HepG2 (cell line): ENCODE measurements at regions of chr1 and their contacts with region 1.

Region 1: GRCh38 chr1:156295391-156295947 is at the start of gene GLMP:
- DNase-seq: peak; percentile 52
- ATAC-seq: peak; percentile 5; the same call in 1 of the 3 replicates
- H3K4me3 ChIP-seq: peak within 1 kb of the TSS; percentile 73 to 91 (median 76)
- H3K27ac ChIP-seq: peak within 1 kb of the TSS; percentile 60
- H3K4me1 ChIP-seq: peaks cover 44% of the 10 kb centered on the region
- H3K27me3 ChIP-seq: no peaks in the 10 kb centered on the region
- CTCF ChIP-seq: no peak
- EP300 ChIP-seq: 0 out of 4 replicates have a peak, but pooled peaks of 1 of the 2 experiments have one; percentile 14
- POLR2A ChIP-seq: peak; percentile 49 to 65; a peak in 3 of 4 replicates
- RAD21 ChIP-seq: no peak
- total RNA-seq, gene GLMP: 39.1 and 75.8 TPM in 2 replicates

Region 2: GRCh38 chr1:155940531-155940992 is 354.9 kb before region 1 on chr1:
- CTCF ChIA-PET with region 1: no interaction called
- POLR2A ChIA-PET with region 1: no interaction called
- in situ Hi-C with region 1: no loop called
- intact Hi-C with region 1: loop called (anchors 5 kb)
- DNase-seq: peak; percentile 86
- ATAC-seq: peak; percentile 65
- H3K4me3 ChIP-seq: peak overlapping the region; percentile 50 to 65 (median 54); a peak in 5 of 6 replicates
- H3K27ac ChIP-seq: peak overlapping the region; percentile 84
- H3K4me1 ChIP-seq: peaks cover 71% of the 10 kb centered on the region
- H3K27me3 ChIP-seq: no peaks in the 10 kb centered on the region
- CTCF ChIP-seq: peak; percentile 4; the same call in 1 of the 2 replicates
- EP300 ChIP-seq: 0 out of 4 replicates have a peak, but pooled peaks of 1 of the 2 experiments have one; percentile 29
- POLR2A ChIP-seq: peak; percentile 45 to 64
- RAD21 ChIP-seq: no peak

Region 3: GRCh38 chr1:156282479-156283222 is 12.8 kb before region 1 on chr1 and contains the start of gene SMG5:
- CTCF ChIA-PET with region 1: no interaction called
- POLR2A ChIA-PET with region 1: interaction called, 115 read pairs
- in situ Hi-C with region 1: no loop called
- intact Hi-C with region 1: no loop called
- DNase-seq: peak; percentile 97
- ATAC-seq: peak; percentile 93
- H3K4me3 ChIP-seq: peak within 1 kb of the TSS; percentile 71 to 95 (median 87)
- H3K27ac ChIP-seq: peak within 1 kb of the TSS; percentile 78
- H3K4me1 ChIP-seq: peaks cover 33% of the 10 kb centered on the region
- H3K27me3 ChIP-seq: no peaks in the 10 kb centered on the region; a peak in 1 of 5 replicates
- CTCF ChIP-seq: no peak
- EP300 ChIP-seq: peak in 1 of 2 experiments; percentile 59; a peak in 1 of 4 replicates
- POLR2A ChIP-seq: peak; percentile 90 to 91
- RAD21 ChIP-seq: 0 out of 2 replicates have a peak, but pooled peaks have one; percentile 10
- total RNA-seq, gene SMG5: 63.3 and 84.0 TPM in 2 replicates

Region 4: DNA sequence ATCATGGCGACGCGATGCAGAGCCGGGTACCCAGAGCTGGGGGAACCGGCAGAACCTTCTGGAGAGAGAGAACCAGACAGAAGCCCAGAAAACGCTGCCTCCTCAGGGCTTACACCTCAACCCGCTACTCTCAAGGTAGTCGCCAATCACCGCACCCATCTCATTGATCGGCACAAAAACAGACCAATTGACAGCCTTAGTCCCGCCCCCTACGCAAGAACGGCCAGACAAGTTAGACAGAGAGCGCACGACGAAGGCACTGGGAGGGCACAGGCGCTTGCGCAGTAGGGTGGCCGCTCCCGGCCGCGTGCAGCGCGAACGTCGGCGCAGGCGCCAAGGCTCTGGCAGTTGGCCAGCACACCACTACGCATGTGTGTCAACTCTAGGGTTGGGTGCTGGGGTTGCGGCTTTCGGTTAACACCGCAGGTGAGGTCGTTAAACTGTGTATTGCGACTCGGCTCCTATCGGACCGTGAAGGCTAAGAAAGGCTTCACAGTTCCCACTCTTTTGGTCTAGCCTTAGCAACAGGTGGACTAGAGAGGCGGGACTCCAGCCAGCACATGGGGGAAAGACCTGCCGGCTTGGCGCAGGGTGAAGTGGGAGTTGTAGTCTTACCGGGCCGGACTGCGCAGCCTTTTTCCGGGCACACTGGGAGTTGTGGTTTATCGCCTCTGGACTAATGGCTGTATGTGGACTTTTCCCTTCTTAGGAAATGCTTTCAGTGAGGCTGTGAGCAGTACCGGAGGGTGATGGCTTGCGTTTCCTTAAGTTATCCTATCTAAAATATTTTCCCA is 42.9 kb after region 1 on chr1 and contains the starts of genes CCT3 and TSACC:
- CTCF ChIA-PET with region 1: no interaction called
- POLR2A ChIA-PET with region 1: interaction called, 4 read pairs
- in situ Hi-C with region 1: no loop called
- intact Hi-C with region 1: loop called (anchors 5 kb)
- DNase-seq: peak; percentile 99
- ATAC-seq: peak; percentile 94
- H3K4me3 ChIP-seq: peak within 1 kb of the TSS; percentile 87 to 94 (median 92)
- H3K27ac ChIP-seq: peak within 1 kb of the TSS; percentile 85
- H3K4me1 ChIP-seq: peaks cover 25% of the 10 kb centered on the region
- H3K27me3 ChIP-seq: no peaks in the 10 kb centered on the region; a peak in 1 of 5 replicates
- CTCF ChIP-seq: no peak
- EP300 ChIP-seq: 0 out of 4 replicates have a peak, but pooled peaks of 1 of the 2 experiments have one; percentile 29
- POLR2A ChIP-seq: peak; percentile 78 to 88
- RAD21 ChIP-seq: peak; percentile 5; the same call in 1 of the 2 replicates
- total RNA-seq, gene CCT3: 615 and 870 TPM in 2 replicates
- total RNA-seq, gene TSACC: 1.6 and 2.6 TPM in 2 replicates